ENCODE measurements at regions of chr5 and their contacts with region 1.

Region 1: GRCh38 chr5:91101600-91102379 is 281.3 kb downstream of the ARRDC3 start:
- DNase-seq: peak; percentile 46 to 61
- ATAC-seq: peak; percentile 93 to 95
- H3K4me3 ChIP-seq: no peak overlapping the region
- H3K27ac ChIP-seq: no peak overlapping the region
- H3K4me1 ChIP-seq: peaks cover 0 to 9% of the 10 kb centered on the region in 2 donors
- H3K27me3 ChIP-seq: no peaks in the 10 kb centered on the region
- CTCF ChIP-seq: peak; percentile 79 to 91 (median 81)
- POLR2A ChIP-seq: no peak

Region 2: DNA sequence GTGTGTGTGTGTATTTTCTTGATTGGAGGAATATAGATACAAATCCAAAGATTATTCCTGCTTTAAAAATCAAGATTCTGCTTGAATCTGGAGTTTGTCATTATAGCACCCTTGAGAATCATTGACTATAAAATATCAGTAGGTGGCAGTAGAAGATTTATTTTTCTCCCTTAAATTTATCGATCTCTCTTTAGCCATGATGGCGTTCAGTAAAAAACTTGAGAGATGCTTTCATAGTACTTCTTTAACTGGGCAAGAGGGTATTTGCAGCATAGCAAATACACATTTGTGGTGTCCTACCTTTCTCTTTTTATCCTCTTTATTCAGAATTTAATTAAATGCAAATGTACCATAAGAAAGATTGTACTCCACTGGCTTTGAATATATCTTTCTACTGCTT is 235.5 kb before region 1 on chr5:
- in situ Hi-C with region 1: loop called in 1 of 4 experiments (anchors 10 kb)
- intact Hi-C with region 1: loop called (anchors 5 kb)
- DNase-seq: no peak
- ATAC-seq: peak in 1 of 2 donors; percentile 49
- H3K4me3 ChIP-seq: no peak overlapping the region
- H3K27ac ChIP-seq: no peak overlapping the region
- H3K4me1 ChIP-seq: peaks cover 0 to 27% of the 10 kb centered on the region in 2 donors
- H3K27me3 ChIP-seq: no peaks in the 10 kb centered on the region
- CTCF ChIP-seq: peak in 4 of 5 experiments; percentile 36 to 50 (median 46)
- POLR2A ChIP-seq: no peak

Region 3: DNA sequence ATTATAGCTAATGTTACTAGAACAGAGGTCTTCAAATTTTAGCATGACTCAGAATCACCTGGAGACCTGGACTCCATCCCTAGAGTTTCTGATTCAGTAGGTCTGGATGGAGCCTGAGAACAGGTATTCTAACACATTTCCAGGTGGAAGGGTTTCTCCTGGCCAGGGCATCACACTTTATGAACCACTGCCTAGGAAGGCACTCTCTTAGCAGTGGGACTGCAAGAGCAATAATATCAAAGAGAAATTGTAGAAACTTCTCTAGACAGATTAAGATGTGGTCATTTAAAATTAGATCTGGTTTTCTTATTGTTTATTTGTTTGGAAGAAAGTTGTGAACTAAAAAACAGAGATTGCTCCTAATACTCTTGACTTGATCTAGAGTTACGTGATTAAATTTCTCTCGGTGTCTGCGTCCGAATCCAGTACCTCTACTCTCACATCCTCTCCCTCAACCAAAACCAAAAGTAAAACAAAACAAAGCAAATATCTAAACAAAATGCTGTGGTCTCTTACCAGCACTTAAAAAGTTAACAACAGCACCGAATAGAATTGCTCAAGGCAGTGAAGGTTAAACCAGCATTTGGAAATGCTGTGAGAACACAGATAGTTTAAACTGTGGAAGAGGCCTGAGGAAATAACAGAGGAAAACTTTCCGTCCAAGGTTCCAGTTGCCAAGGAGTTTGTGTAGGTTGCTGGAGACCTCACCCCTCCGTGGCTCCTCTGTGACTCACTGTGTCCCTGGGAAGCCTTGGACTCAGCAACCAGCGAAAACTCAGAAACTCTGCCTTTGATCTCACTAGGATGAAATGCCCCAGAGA is 87.9 kb after region 1 on chr5:
- in situ Hi-C with region 1: loop called in 1 of 4 experiments (anchors 10 kb)
- intact Hi-C with region 1: no loop called
- DNase-seq: no peak
- ATAC-seq: peak; percentile 47 to 51
- H3K4me3 ChIP-seq: peak overlapping the region; percentile 7 to 41 (median 22)
- H3K27ac ChIP-seq: peak overlapping the region; percentile 45 to 67 (median 52)
- H3K4me1 ChIP-seq: peaks cover 0 to 9% of the 10 kb centered on the region in 2 donors
- H3K27me3 ChIP-seq: no peaks in the 10 kb centered on the region
- CTCF ChIP-seq: no peak
- POLR2A ChIP-seq: no peak

Region 4: GRCh38 chr5:91219803-91220371 is 118.1 kb after region 1 on chr5:
- in situ Hi-C with region 1: loop called in 1 of 4 experiments (anchors 10 kb)
- intact Hi-C with region 1: loop called (anchors 5 kb)
- DNase-seq: no peak
- ATAC-seq: no peak
- H3K4me3 ChIP-seq: no peak overlapping the region
- H3K27ac ChIP-seq: no peak overlapping the region
- H3K4me1 ChIP-seq: no peaks in the 10 kb centered on the region
- H3K27me3 ChIP-seq: no peaks in the 10 kb centered on the region
- CTCF ChIP-seq: peak in 2 of 5 experiments; percentile 24 to 43
- POLR2A ChIP-seq: no peak

Region 5: DNA sequence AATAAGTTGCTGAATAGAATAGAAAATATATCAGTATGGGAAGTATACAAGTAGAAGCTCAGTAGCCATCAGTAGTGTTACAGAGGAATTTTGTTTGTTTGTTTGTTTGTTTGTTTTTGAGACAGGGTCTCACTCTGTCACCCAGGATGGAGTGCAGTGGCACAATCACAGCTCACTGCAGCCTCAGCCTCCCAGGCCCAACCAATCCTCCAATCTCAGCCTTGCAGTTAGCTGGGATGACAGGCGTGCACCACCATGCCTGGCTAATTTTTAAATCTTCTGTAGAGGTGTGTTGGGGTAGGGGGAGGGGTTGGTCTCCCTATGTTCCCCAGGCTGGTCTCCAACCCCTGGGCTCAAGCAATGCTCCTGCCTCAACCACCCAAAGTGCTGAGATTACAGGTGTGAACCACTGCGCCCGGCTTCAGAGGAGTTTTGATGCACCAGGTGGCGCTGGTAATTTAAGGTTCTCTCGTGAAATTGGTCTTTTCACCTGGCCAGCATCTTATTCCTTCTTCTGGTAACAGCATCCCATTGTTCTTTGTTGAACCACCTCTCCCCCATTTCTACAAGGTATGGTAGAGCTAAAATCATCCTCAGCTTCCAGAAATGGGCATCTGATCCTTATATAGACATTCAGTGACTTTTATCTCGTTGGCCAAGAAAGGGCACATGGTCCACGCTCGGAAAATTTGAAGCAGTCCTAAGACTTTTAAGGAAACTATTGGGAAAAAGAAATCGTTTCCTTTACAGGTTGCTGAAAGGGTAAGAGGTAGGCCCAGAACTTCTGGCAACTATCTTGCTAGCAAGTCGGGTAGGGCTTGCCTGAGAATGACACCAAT is 124.3 kb after region 1 on chr5:
- in situ Hi-C with region 1: no loop called
- intact Hi-C with region 1: loop called (anchors 5 kb)
- DNase-seq: no peak
- ATAC-seq: peak; percentile 73 to 77
- H3K4me3 ChIP-seq: no peak overlapping the region
- H3K27ac ChIP-seq: no peak overlapping the region
- H3K4me1 ChIP-seq: no peaks in the 10 kb centered on the region
- H3K27me3 ChIP-seq: no peaks in the 10 kb centered on the region
- CTCF ChIP-seq: peak; percentile 26 to 51 (median 50)
- POLR2A ChIP-seq: no peak

Region 6: GRCh38 chr5:91293131-91293530 is 191.3 kb after region 1 on chr5:
- in situ Hi-C with region 1: loop called in 1 of 4 experiments (anchors 10 kb)
- intact Hi-C with region 1: no loop called
- DNase-seq: no peak
- ATAC-seq: no peak
- H3K4me3 ChIP-seq: no peak overlapping the region
- H3K27ac ChIP-seq: no peak overlapping the region
- H3K4me1 ChIP-seq: peaks cover 11 to 16% of the 10 kb centered on the region in 2 donors
- H3K27me3 ChIP-seq: no peaks in the 10 kb centered on the region
- CTCF ChIP-seq: no peak
- POLR2A ChIP-seq: no peak